Panc1 (cell line): ENCODE measurements at regions of chr2 and their contacts with region 1.

Region 1: GRCh38 chr2:159090514-159091201 is 122.2 kb downstream of the TANC1 start:
- DNase-seq: no peak
- ATAC-seq: no peak
- H3K4me3 ChIP-seq: no peak overlapping the region
- H3K27ac ChIP-seq: peak overlapping the region; percentile 86
- H3K4me1 ChIP-seq: peaks cover 55% of the 10 kb centered on the region
- H3K27me3 ChIP-seq: no peaks in the 10 kb centered on the region
- CTCF ChIP-seq: no peak

Region 2: DNA sequence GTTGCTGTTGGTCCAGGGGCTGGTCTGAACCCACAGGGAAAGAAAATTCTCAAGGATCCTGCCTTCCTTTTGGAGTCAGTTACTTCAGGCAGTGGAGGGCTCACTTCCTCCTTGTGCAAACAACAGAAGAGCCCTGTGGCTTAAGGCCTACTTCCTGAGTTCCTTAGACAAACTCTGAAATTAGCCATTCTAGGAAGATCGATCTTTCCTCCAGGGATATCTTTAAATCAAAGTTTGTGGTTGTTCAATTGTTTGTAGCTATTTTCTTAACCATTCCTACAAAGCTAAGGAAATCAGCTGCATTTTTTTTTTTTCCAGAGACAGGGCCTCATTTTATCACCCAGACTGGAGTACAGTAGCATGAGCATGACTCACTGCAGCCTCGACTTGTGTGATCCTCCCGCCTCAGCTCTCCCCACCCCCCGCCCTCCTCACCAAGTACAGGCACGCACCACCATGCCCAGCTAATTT is 33.8 kb after region 1 on chr2:
- CTCF ChIA-PET with region 1: no interaction called
- POLR2A ChIA-PET with region 1: interaction called, 12 read pairs
- in situ Hi-C with region 1: no loop called
- intact Hi-C with region 1: no loop called
- DNase-seq: peak; percentile 18
- ATAC-seq: peak; percentile 79
- H3K4me3 ChIP-seq: no peak overlapping the region
- H3K27ac ChIP-seq: peak overlapping the region; percentile 67
- H3K4me1 ChIP-seq: peaks cover 19% of the 10 kb centered on the region
- H3K27me3 ChIP-seq: no peaks in the 10 kb centered on the region
- CTCF ChIP-seq: no peak

Region 3: GRCh38 chr2:159275111-159275510 is 184.5 kb after region 1 on chr2:
- CTCF ChIA-PET with region 1: no interaction called
- POLR2A ChIA-PET with region 1: no interaction called
- in situ Hi-C with region 1: no loop called
- intact Hi-C with region 1: no loop called
- DNase-seq: no peak
- ATAC-seq: no peak
- H3K4me3 ChIP-seq: no peak overlapping the region
- H3K27ac ChIP-seq: no peak overlapping the region
- H3K4me1 ChIP-seq: no peaks in the 10 kb centered on the region
- H3K27me3 ChIP-seq: no peaks in the 10 kb centered on the region
- CTCF ChIP-seq: no peak